ENCODE measurements at regions of chr22 and their contacts with region 1.

Region 1: DNA sequence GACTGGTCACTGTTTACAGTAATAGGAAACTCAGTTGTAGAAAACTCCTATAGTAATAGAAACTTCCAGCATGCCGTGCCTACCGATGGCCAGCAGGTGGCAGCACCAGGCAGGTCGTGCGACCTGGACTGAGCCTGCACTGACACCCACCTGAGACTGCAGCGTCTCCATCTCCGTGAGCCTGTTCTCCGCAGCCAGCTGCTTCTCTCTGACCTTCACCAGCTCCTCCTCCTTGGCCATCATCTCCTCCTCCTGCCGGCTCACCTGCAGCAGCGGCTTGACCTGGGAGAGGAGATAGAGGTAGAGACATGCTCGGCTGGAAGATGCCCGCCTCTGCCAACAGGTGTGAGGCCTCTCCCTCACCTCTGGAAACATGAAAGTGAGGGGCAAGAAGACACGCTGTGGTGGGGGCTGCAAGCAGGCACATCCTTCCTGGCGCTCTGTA is 48.5 kb downstream of the APOL1 start:
- DNase-seq: peak; percentile 88
- H3K4me3 ChIP-seq: no peak overlapping the region; a peak in 1 of 4 replicates
- H3K27ac ChIP-seq: peak overlapping the region in 1 of 2 experiments; percentile 4; a peak in 1 of 4 replicates
- H3K4me1 ChIP-seq: no peaks in the 10 kb centered on the region
- H3K27me3 ChIP-seq: no peaks in the 10 kb centered on the region
- CTCF ChIP-seq: peak; percentile 95
- EP300 ChIP-seq: no peak
- RAD21 ChIP-seq: peak; percentile 92

Region 2: GRCh38 chr22:36286471-36287224 is 14.8 kb before region 1 on chr22:
- CTCF ChIA-PET with region 1: interaction called, 113 read pairs
- POLR2A ChIA-PET with region 1: no interaction called
- DNase-seq: peak; percentile 94
- H3K4me3 ChIP-seq: no peak overlapping the region
- H3K27ac ChIP-seq: peak overlapping the region in 1 of 2 experiments; percentile 29; a peak in 2 of 4 replicates
- H3K4me1 ChIP-seq: no peaks in the 10 kb centered on the region; a peak in 1 of 4 replicates
- H3K27me3 ChIP-seq: no peaks in the 10 kb centered on the region
- CTCF ChIP-seq: peak; percentile 90
- EP300 ChIP-seq: no peak
- RAD21 ChIP-seq: peak; percentile 82

Region 3: GRCh38 chr22:36323182-36323854 is 21.9 kb after region 1 on chr22:
- CTCF ChIA-PET with region 1: interaction called, 26 read pairs
- POLR2A ChIA-PET with region 1: no interaction called
- DNase-seq: no peak
- H3K4me3 ChIP-seq: no peak overlapping the region
- H3K27ac ChIP-seq: peak overlapping the region in 1 of 2 experiments; percentile 98; a peak in 2 of 4 replicates
- H3K4me1 ChIP-seq: peaks cover 6 to 45% of the 10 kb centered on the region in 2 experiments; a peak in 3 of 4 replicates
- H3K27me3 ChIP-seq: no peaks in the 10 kb centered on the region
- CTCF ChIP-seq: no peak
- EP300 ChIP-seq: no peak
- RAD21 ChIP-seq: no peak

Region 4: DNA sequence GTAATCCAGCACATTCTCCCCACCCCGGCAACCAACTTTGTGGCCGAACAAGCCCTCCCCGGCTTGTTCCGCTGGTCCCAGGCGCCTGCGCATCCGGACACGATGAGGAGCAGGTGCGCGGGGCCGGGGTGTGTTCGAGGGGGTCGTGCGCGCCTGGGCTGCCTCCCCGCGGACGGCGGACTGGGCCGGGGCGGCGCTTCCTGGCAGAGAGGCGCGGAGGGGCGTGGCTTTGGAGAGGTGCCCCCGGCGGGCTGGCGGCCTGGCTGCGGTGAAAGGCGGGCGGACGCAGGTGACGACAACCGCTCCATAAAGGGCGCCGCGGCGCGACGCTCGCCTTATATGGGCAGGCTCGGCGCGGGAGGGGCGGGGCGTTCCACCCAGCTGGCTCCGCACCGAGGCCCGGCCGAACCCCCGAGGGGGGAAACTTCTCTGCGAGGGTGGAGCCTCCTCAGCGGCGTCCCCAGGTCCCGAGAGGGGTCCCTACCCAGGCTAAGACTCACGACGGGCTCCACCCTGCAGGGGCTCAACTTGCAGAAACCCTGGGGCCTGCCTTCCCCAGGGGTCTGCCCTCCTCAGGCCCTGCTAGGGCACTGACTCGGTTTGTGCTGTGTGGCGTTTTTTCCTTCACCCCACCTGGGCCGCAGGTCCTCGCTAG is 153.6 kb after region 1 on chr22:
- CTCF ChIA-PET with region 1: interaction called, 26 read pairs
- POLR2A ChIA-PET with region 1: no interaction called
- DNase-seq: peak; percentile 96
- H3K4me3 ChIP-seq: peak overlapping the region; percentile 37 to 44; a peak in 3 of 4 replicates
- H3K27ac ChIP-seq: peak overlapping the region in 1 of 2 experiments; percentile 39; a peak in 1 of 4 replicates
- H3K4me1 ChIP-seq: peaks cover 0 to 8% of the 10 kb centered on the region in 2 experiments; a peak in 1 of 4 replicates
- H3K27me3 ChIP-seq: no peaks in the 10 kb centered on the region
- CTCF ChIP-seq: no peak
- EP300 ChIP-seq: no peak
- RAD21 ChIP-seq: peak; percentile 36

Region 5: DNA sequence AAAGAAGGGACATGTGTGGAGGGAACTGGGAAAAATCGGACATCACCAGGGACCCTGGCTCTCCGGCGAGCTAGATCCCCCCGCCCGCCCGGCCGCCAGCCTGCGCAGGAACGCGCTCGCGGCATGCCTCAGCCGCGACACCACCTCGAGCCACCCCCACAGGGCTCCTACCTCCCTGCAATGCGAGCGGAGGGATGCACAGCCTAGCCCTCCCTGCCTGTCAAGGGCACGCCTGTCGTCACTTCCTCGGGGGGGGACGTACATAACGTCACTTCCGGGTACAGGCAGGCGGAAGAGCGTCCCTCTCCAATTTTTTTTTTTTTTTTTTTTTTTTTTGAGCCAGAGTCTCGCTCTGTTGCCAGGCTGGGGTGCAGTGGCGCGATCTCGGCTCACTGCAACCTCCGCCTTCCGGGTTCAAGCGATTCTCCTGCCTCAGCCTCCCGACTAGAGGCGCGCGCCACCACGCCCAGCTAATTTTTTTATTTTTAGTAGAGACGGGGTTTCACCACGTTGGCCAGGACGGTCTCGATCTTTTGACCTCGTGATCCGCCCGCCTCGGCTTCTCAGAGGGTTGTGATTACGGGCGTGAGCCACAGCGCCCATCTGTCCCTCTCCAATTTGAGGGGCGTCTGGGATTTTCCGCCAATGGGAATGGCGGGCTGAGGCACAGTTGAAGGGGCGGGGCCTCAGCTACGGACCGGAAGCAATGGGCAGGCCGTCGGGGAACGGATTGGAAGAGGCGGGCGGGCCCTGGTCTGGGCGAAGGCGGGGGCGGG is 180.2 kb after region 1 on chr22 and contains the start of gene TXN2:
- CTCF ChIA-PET with region 1: interaction called, 329 read pairs
- POLR2A ChIA-PET with region 1: no interaction called
- DNase-seq: peak; percentile 97
- H3K4me3 ChIP-seq: peak within 1 kb of the TSS; percentile 70 to 99
- H3K27ac ChIP-seq: peak within 1 kb of the TSS; percentile 91 to 100
- H3K4me1 ChIP-seq: peaks cover 5 to 10% of the 10 kb centered on the region in 2 experiments
- H3K27me3 ChIP-seq: no peaks in the 10 kb centered on the region
- CTCF ChIP-seq: no peak
- EP300 ChIP-seq: no peak
- RAD21 ChIP-seq: no peak
- polyA plus RNA-seq, gene TXN2: 251 and 284 TPM in 2 replicates

Region 6: DNA sequence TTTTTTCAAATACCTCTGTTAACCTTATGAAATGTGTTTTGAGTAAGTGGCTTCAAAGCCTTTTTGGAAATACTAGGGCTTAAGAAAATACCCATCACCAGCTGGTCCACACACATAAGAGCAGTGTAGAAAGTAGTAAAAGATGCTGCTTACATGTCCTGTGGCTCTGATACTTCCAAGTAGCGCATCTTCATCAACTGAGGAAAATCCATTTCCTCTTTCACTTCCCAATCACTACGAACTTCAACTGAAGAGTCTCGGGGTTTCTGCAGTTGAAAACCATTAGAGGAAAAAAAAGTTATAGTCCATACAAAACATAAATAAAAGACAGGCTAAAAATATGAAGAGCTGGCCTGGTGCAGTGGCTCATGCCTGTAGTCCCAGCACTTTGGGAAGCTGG is 219.0 kb after region 1 on chr22:
- CTCF ChIA-PET with region 1: no interaction called
- POLR2A ChIA-PET with region 1: no interaction called
- DNase-seq: no peak
- H3K4me3 ChIP-seq: no peak overlapping the region
- H3K27ac ChIP-seq: no peak overlapping the region
- H3K4me1 ChIP-seq: no peaks in the 10 kb centered on the region
- H3K27me3 ChIP-seq: no peaks in the 10 kb centered on the region
- CTCF ChIP-seq: no peak
- EP300 ChIP-seq: no peak
- RAD21 ChIP-seq: no peak

Region 7: DNA sequence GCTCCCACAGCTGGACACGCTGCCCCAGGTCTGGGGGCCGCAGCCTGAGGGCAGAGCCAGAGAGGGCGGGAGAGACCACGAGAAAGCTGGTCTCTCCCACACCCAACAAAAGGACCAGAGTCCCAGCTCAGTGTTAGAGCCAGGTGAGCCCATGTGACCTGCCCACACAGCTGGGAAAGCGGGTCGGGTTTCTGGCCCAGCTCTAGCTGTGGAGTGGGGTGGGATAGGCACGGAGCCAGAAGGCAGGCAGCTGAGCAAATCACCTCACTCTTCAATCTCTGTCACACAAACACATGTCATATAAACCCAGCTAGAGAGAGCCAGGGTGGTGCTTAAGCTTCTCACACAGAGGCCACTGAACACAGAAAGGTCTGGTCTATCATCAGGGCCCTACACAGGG is 235.3 kb after region 1 on chr22:
- CTCF ChIA-PET with region 1: no interaction called
- POLR2A ChIA-PET with region 1: no interaction called
- DNase-seq: no peak
- H3K4me3 ChIP-seq: no peak overlapping the region
- H3K27ac ChIP-seq: no peak overlapping the region
- H3K4me1 ChIP-seq: peaks cover 0 to 3% of the 10 kb centered on the region in 2 experiments; a peak in 1 of 4 replicates
- H3K27me3 ChIP-seq: no peaks in the 10 kb centered on the region
- CTCF ChIP-seq: no peak
- EP300 ChIP-seq: no peak
- RAD21 ChIP-seq: no peak